Colonic mucosa (tissue), 4 donors: ENCODE measurements at regions of chr1 and their contacts with region 1.

Region 1: GRCh38 chr1:241998412-241998921 is 431 bp downstream of the MAP1LC3C start:
- DNase-seq: peak; percentile 88
- H3K4me3 ChIP-seq: no peak overlapping the region
- H3K27ac ChIP-seq: no peak overlapping the region
- H3K4me1 ChIP-seq: no peaks in the 10 kb centered on the region
- H3K27me3 ChIP-seq: no peaks in the 10 kb centered on the region
- CTCF ChIP-seq: peak; percentile 53

Region 2: DNA sequence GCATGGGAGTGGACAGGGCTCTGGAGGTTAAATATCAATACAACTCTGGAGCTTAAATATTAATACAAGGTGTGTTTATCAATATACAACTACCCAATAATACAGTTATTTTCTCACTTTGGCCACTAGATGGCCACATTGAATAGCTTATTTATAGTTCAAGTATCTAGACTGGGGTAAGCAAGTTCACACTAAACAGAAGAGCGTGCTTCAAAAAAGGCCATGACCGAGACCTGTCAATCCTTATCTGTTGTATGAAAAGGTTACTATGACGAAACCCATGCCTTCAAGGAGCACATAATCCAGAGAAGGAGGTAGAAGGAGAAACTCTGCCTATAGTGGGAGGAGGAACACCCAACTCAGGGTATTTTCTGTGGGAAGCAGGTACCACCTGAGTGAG is 387.4 kb before region 1 on chr1:
- intact Hi-C with region 1: loop called (anchors 10 kb)
- DNase-seq: no peak
- H3K4me3 ChIP-seq: no peak overlapping the region
- H3K27ac ChIP-seq: no peak overlapping the region
- H3K4me1 ChIP-seq: peaks cover 13% of the 10 kb centered on the region
- H3K27me3 ChIP-seq: no peaks in the 10 kb centered on the region
- CTCF ChIP-seq: peak; percentile 53

Region 3: GRCh38 chr1:241847796-241848685 is 150.4 kb before region 1 on chr1 and contains the start of gene EXO1:
- intact Hi-C with region 1: loop called (anchors 5 kb)
- DNase-seq: peak; percentile 90
- H3K4me3 ChIP-seq: peak within 1 kb of the TSS; percentile 76
- H3K27ac ChIP-seq: peak within 1 kb of the TSS; percentile 100
- H3K4me1 ChIP-seq: peaks cover 2% of the 10 kb centered on the region
- H3K27me3 ChIP-seq: no peaks in the 10 kb centered on the region
- CTCF ChIP-seq: no peak
- total RNA-seq, gene EXO1: 5.1 to 17.6 TPM